Activated B cell treated with CpG ODN at 0.5 μM for 24 hours (primary cell): ENCODE measurements at regions of chr6 and their contacts with region 1.

Region 1: DNA sequence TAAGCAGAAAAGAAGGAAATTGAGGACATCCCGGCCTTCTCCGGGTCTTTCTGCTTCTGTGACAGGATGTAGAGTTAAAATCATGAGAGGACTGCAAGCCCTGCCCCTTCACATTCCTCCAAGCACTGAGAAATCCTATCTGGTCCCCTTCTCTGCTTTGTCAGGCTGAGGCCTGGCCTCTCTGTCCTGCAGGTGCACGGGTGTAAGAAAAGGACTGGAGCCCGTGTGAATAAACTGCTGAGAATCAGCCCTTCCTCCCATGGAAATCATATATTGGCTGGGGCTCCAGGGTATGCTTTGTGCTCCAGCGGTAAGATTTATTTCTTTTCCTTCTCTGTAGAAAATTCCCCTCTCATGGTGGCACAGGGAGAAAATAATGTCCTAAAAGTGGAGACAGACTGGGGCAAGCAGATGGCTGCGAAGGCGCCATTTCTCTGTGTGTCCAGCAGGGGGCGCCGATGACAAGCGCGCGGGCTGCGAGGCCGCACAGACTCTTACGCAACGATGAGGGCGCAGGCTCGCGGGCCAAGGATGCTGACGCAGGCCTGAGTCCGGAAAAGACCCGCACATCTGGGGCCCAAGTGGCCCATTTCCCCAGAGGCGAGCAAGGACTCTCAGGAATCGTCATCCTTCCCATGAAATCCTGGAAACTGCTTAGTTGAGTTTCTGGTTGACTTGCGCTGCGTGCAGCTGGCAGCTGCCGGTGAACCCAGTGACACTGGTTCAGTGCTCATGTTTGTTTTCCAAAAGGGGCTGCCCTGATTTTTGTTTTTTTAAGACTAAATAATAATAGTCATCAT is 258.6 kb downstream of the ADGB start:
- DNase-seq: peak; percentile 61
- ATAC-seq: peak; percentile 91
- H3K4me3 Mint-ChIP-seq: peak overlapping the region; percentile 48
- H3K27ac Mint-ChIP-seq: peak overlapping the region; percentile 9
- H3K4me1 Mint-ChIP-seq: peaks cover 8% of the 10 kb centered on the region
- H3K27me3 Mint-ChIP-seq: peaks cover under 1% of the 10 kb centered on the region
- CTCF ChIP-seq: peak; percentile 74

Region 2: DNA sequence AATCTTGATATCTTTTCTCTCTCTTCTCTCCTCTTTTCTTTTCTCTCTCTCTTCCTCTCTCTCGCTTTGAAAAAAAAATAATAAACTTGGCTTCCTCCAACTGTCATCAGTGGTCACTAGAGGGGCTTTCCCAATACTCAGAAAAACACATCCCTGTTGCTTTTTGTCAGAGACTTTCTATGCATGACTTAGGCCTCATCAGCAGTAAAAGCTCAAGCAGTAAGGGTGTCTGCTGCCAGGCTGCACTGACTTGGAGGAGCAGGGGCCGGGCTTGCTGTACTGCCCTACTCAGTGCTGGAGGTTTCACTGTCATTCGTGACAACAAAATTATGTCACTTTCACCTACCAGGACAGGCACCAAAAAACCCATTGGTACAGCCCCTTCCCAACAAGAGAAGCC is 13.4 kb after region 1 on chr6:
- CTCF ChIA-PET with region 1: no interaction called
- POLR2A ChIA-PET with region 1: no interaction called
- intact Hi-C with region 1: no loop called
- DNase-seq: no peak
- ATAC-seq: peak; percentile 28
- H3K4me3 Mint-ChIP-seq: no peak overlapping the region
- H3K27ac Mint-ChIP-seq: no peak overlapping the region
- H3K4me1 Mint-ChIP-seq: peaks cover 5% of the 10 kb centered on the region
- H3K27me3 Mint-ChIP-seq: no peaks in the 10 kb centered on the region
- CTCF ChIP-seq: no peak

Region 3: GRCh38 chr6:146946559-146946958 is 89.2 kb after region 1 on chr6:
- CTCF ChIA-PET with region 1: no interaction called
- POLR2A ChIA-PET with region 1: no interaction called
- intact Hi-C with region 1: no loop called
- DNase-seq: no peak
- ATAC-seq: no peak
- H3K4me3 Mint-ChIP-seq: no peak overlapping the region
- H3K27ac Mint-ChIP-seq: no peak overlapping the region
- H3K4me1 Mint-ChIP-seq: no peaks in the 10 kb centered on the region
- H3K27me3 Mint-ChIP-seq: peaks cover 2% of the 10 kb centered on the region
- CTCF ChIP-seq: no peak

Region 4: DNA sequence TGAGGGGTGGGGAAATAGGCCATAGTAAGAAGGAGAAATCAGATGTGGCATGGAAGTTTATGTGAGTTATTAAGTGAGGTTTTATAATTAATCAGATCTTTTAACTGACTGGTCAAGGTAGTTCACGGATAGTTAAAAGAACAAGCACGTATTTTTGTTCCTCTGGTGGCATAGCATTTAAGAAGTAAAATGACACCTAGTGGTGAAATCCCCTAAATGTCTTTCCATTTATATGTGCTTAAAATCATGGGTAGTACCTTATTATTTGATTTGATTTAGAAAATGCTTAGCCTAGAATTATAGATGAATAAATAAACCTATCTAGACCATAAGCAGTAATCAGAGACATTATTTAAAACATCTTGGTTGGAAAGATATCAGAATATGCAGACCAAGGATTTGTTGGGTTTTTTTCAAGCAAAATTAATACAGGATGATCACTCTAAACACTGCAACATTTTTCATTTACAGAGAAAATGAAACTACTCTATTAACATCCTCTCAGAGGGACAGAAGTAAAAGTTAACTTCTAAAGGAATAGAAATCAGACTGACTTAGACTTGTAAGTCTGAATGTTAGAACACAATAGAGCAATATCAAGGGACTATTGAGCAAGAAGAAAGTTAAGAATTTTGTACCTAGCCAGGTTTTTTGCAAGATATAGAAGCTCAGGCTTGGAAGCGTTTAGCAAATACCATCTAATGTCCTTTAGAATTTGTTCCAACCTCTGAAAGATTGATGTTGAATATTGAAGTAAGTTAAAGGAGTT is 427.9 kb after region 1 on chr6:
- CTCF ChIA-PET with region 1: interaction called, 12 read pairs
- POLR2A ChIA-PET with region 1: no interaction called
- intact Hi-C with region 1: loop called (anchors 1 kb)
- DNase-seq: no peak
- ATAC-seq: no peak
- H3K4me3 Mint-ChIP-seq: no peak overlapping the region
- H3K27ac Mint-ChIP-seq: peak overlapping the region; percentile 1
- H3K4me1 Mint-ChIP-seq: peaks cover 13% of the 10 kb centered on the region
- H3K27me3 Mint-ChIP-seq: no peaks in the 10 kb centered on the region
- CTCF ChIP-seq: no peak

Region 5: DNA sequence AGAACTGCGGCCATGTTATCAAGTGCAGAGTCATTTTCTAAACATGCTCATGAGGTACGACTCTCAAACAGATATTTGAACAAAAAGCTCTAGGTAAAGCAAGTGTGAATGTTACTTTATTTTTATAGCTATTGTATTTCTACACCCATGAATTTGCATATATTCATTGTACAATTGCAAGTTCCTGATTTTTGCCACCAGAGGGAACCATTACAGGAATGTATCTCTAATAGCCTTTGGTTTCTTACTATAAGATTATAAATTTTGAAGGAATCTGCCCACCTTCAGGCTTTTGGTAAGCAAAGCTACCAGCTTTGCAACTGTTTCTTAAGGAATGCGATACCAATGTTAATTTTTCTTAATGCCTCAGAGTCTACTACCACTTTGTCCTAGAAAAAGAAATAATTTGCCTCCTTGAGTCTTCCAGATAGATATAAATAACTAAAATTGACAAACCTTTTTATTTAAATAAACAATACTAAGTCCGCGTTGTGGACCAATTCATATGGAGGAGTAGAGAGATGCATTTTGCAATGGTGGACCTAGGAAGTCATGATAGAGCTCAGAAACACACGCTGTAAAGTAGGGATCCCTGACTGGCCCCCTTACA is 525.7 kb after region 1 on chr6:
- CTCF ChIA-PET with region 1: no interaction called
- POLR2A ChIA-PET with region 1: no interaction called
- intact Hi-C with region 1: loop called (anchors 10 kb)
- DNase-seq: no peak
- ATAC-seq: no peak
- H3K4me3 Mint-ChIP-seq: no peak overlapping the region
- H3K27ac Mint-ChIP-seq: no peak overlapping the region
- H3K4me1 Mint-ChIP-seq: no peaks in the 10 kb centered on the region
- H3K27me3 Mint-ChIP-seq: no peaks in the 10 kb centered on the region
- CTCF ChIP-seq: no peak

Region 6: GRCh38 chr6:148250975-148251685 is 1393.8 kb after region 1 on chr6:
- CTCF ChIA-PET with region 1: no interaction called
- POLR2A ChIA-PET with region 1: no interaction called
- intact Hi-C with region 1: loop called (anchors 5 kb)
- DNase-seq: no peak
- ATAC-seq: no peak
- H3K4me3 Mint-ChIP-seq: no peak overlapping the region
- H3K27ac Mint-ChIP-seq: no peak overlapping the region
- H3K4me1 Mint-ChIP-seq: no peaks in the 10 kb centered on the region
- H3K27me3 Mint-ChIP-seq: peaks cover 2% of the 10 kb centered on the region
- CTCF ChIP-seq: no peak